SK-N-SH (cell line): ENCODE measurements at regions of chr3 and their contacts with region 1.

Region 1: DNA sequence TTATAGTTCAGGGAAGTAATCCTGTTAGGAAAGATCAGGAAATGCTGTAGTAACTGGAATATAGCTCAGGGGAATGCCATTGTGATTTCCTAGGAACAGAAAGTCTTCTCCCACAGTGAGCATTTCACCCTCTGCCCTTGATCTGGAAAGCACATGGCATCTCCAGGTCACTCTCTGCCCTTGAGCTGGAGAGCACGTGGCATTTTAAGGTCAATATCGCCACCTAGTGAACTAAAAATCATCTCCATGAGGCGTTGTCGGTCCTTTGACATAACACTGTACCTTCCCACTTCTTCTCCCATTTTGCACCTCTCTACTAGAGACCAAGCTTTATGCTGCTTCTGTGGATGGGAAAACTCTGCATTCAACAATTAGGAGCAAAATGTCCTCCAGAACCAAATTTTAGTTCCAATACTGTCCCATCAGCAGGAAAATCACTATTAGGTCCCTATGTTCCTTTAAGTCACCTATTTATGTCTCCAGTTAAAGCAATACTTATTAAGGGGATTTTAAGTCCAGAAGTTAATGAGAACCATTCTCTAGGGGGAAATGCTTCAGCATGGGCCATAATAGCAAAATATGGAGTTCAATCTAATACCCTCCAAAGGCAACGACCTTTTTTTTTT is 54.7 kb upstream of the GK5 start:
- DNase-seq: peak; percentile 73
- H3K4me3 ChIP-seq: no peak overlapping the region
- H3K27ac ChIP-seq: no peak overlapping the region
- H3K4me1 ChIP-seq: no peaks in the 10 kb centered on the region
- H3K27me3 ChIP-seq: no peaks in the 10 kb centered on the region
- CTCF ChIP-seq: peak; percentile 71
- EP300 ChIP-seq: no peak
- RAD21 ChIP-seq: peak; percentile 94

Region 2: DNA sequence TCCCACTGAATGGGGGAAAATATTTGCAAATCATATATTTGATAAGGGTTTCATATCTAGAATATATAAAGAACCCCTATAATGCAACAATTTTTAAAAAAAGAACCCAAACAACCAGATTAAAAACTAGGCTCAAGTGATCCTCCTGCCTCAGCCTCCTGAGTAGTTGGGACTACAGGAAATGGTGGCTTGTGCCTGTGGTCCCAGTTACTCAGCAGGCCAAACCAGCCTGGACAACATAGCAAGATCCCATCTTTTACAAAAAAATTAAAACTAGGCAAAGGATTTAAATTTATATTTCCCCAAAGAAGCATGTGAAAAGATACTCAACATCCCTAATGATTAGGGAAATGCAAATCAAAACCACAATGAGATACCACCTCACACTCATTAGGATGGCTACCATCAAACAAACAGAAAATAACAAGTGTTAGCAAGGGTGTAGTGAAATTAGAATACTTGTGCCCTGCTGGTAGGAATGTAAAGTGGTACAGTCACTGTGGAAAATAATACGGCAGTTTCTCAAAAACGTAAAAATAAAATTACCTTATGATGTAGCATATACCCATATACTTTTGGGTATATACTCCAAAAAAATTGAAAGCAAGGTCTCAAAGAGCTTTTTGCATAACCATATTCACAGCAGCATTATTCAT is 150.4 kb before region 1 on chr3:
- CTCF ChIA-PET with region 1: interaction called, 57 read pairs
- POLR2A ChIA-PET with region 1: no interaction called
- DNase-seq: no peak
- H3K4me3 ChIP-seq: no peak overlapping the region
- H3K27ac ChIP-seq: no peak overlapping the region
- H3K4me1 ChIP-seq: no peaks in the 10 kb centered on the region
- H3K27me3 ChIP-seq: no peaks in the 10 kb centered on the region
- CTCF ChIP-seq: peak; percentile 45
- EP300 ChIP-seq: no peak
- RAD21 ChIP-seq: no peak

Region 3: DNA sequence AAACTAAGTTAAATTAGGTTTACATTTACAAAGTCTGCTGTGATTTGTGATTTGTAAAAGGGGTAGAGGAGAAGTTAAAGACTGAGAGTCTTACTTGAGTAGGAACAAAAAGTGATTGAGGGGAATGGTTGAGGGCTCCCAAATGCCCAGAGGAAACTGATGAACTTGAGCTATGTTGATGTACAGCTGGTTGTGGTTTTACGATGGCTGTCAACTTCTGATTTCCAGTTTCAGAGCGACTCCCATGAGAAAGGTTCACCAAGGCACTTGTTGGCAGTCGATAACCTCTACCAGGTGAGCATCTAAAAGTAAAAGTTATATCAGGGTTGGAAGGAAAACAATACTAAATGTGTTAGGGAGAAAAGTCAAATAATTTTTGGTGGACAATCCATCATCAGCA is 76.7 kb after region 1 on chr3:
- CTCF ChIA-PET with region 1: no interaction called
- POLR2A ChIA-PET with region 1: no interaction called
- DNase-seq: no peak
- H3K4me3 ChIP-seq: no peak overlapping the region
- H3K27ac ChIP-seq: no peak overlapping the region
- H3K4me1 ChIP-seq: no peaks in the 10 kb centered on the region
- H3K27me3 ChIP-seq: no peaks in the 10 kb centered on the region
- CTCF ChIP-seq: no peak
- EP300 ChIP-seq: no peak
- RAD21 ChIP-seq: no peak